Left ventricle myocardium inferior (tissue), 1 donor: ENCODE measurements at regions of chr17 and their contacts with region 1.

Region 1: GRCh38 chr17:64420143-64420971 is 28.6 kb upstream of the MILR1 start:
- DNase-seq: no peak
- H3K4me3 ChIP-seq: no peak overlapping the region
- H3K27ac ChIP-seq: no peak overlapping the region
- H3K4me1 ChIP-seq: peaks cover 11% of the 10 kb centered on the region
- H3K27me3 ChIP-seq: peaks cover 5% of the 10 kb centered on the region
- CTCF ChIP-seq: peak; percentile 85

Region 2: DNA sequence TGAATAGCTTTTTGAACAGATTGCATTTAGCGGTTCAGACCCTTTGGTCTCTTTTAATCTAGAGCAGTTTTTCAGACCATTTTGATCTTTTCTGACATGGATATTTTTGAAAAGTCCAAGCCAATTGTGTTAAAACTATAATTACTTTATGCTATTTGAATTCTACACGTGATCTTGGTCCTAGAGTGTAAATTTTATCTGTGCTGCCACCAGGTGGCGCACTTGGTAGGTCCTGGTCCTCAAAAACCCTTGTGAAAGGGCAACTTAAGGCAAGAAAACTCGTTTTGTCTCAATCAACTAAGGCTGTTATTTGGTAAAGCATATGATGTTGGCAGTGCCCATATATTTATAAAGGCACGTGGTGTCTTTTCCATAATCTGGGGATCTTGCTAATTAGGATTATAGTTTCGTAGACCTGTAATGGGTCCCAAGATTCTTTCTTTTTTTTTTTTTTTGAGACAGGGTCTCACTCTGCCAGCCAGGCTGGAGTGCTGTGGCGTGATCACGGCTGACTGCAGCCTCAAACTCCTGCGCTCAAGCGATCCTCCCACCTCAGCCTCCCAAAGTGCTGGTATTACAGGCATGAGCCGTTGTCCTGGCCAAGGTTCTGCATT is 113.4 kb before region 1 on chr17:
- intact Hi-C with region 1: loop called (anchors 2 kb)
- DNase-seq: peak; percentile 63
- H3K4me3 ChIP-seq: no peak overlapping the region
- H3K27ac ChIP-seq: no peak overlapping the region
- H3K4me1 ChIP-seq: peaks cover 28% of the 10 kb centered on the region
- H3K27me3 ChIP-seq: no peaks in the 10 kb centered on the region
- CTCF ChIP-seq: peak; percentile 87

Region 3: GRCh38 chr17:64320613-64321553 is 99.5 kb before region 1 on chr17:
- intact Hi-C with region 1: loop called (anchors 5 kb)
- DNase-seq: peak; percentile 38
- H3K4me3 ChIP-seq: peak overlapping the region; percentile 15
- H3K27ac ChIP-seq: peak overlapping the region; percentile 62
- H3K4me1 ChIP-seq: peaks cover 67% of the 10 kb centered on the region
- H3K27me3 ChIP-seq: no peaks in the 10 kb centered on the region
- CTCF ChIP-seq: peak; percentile 83

Region 4: DNA sequence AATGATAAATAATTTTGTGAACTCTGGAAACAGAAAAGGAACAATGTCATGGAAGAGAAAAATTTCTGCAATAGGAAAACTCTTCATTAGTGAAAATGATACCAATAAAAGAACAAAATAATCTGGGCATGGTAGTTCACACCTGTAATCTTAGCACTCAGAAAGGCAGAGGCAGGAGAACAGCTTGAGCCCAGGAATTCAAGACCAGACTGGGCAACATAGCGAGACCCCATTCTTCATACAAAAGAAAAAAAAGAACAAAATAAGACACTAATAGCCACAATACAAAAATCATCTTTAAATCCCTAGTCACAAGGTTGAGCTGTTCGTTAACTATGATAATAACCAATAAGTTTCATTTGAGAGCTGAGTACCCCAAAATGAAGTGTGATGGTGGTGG is 67.9 kb after region 1 on chr17:
- intact Hi-C with region 1: loop called (anchors 5 kb)
- DNase-seq: no peak
- H3K4me3 ChIP-seq: no peak overlapping the region
- H3K27ac ChIP-seq: no peak overlapping the region
- H3K4me1 ChIP-seq: no peaks in the 10 kb centered on the region
- H3K27me3 ChIP-seq: no peaks in the 10 kb centered on the region
- CTCF ChIP-seq: no peak

Region 5: GRCh38 chr17:64648234-64648633 is 227.9 kb after region 1 on chr17:
- intact Hi-C with region 1: loop called (anchors 5 kb)
- DNase-seq: no peak
- H3K4me3 ChIP-seq: no peak overlapping the region
- H3K27ac ChIP-seq: no peak overlapping the region
- H3K4me1 ChIP-seq: peaks cover 13% of the 10 kb centered on the region
- H3K27me3 ChIP-seq: no peaks in the 10 kb centered on the region
- CTCF ChIP-seq: no peak